ENCODE measurements at regions of chr3 and their contacts with region 1.

Region 1: GRCh38 chr3:65953301-65953812 is 85.4 kb downstream of the MAGI1 start:
- DNase-seq: peak; percentile 52
- H3K4me3 ChIP-seq: no peak overlapping the region
- H3K27ac ChIP-seq: peak overlapping the region; percentile 70
- H3K4me1 ChIP-seq: peaks cover 83% of the 10 kb centered on the region
- H3K27me3 ChIP-seq: no peaks in the 10 kb centered on the region
- CTCF ChIP-seq: no peak
- POLR2A ChIP-seq: no peak

Region 2: DNA sequence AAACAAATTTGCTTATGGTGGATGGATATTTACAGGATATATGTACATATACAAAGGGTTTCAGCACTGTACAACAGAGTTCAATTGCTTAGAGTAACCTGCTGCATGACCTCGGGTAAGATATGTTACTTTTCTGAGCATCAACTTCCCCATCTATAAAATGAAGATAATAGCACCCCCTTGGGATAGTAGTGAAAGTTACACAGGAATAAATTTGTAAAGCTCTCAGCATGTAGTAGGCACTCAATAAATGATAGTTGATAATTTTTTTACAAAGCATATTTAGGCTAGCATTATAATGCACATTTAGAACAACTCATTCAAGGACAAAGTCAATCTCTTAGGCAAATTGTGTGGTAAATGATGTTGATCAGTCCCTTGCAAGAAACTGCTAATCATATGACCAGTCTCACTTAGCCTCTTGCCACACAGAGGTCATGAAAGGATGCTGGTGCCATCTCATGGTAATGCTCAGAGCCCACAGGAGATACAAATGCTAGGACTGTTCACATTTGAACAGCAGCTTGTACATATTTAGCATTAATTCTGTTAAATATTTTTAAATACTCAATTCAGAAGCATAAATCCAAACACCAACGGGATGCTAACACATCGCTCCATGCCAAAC is 38.5 kb before region 1 on chr3:
- CTCF ChIA-PET with region 1: interaction called, 7 read pairs
- POLR2A ChIA-PET with region 1: no interaction called
- dilution Hi-C with region 1: no loop called
- intact Hi-C with region 1: loop called (anchors 1 kb)
- DNase-seq: peak; percentile 17
- H3K4me3 ChIP-seq: no peak overlapping the region
- H3K27ac ChIP-seq: peak overlapping the region; percentile 45
- H3K4me1 ChIP-seq: peaks cover 13% of the 10 kb centered on the region
- H3K27me3 ChIP-seq: no peaks in the 10 kb centered on the region
- CTCF ChIP-seq: no peak
- POLR2A ChIP-seq: no peak

Region 3: GRCh38 chr3:65936908-65937638 is 16.3 kb before region 1 on chr3:
- CTCF ChIA-PET with region 1: interaction called, 8 read pairs
- POLR2A ChIA-PET with region 1: no interaction called
- dilution Hi-C with region 1: no loop called
- intact Hi-C with region 1: loop called (anchors 1 kb)
- DNase-seq: peak; percentile 82
- H3K4me3 ChIP-seq: no peak overlapping the region
- H3K27ac ChIP-seq: no peak overlapping the region
- H3K4me1 ChIP-seq: peaks cover 29% of the 10 kb centered on the region
- H3K27me3 ChIP-seq: no peaks in the 10 kb centered on the region
- CTCF ChIP-seq: no peak
- POLR2A ChIP-seq: no peak

Region 4: GRCh38 chr3:65988411-65989180 is 35.2 kb after region 1 on chr3:
- CTCF ChIA-PET with region 1: no interaction called
- POLR2A ChIA-PET with region 1: no interaction called
- dilution Hi-C with region 1: no loop called
- intact Hi-C with region 1: no loop called
- DNase-seq: no peak
- H3K4me3 ChIP-seq: no peak overlapping the region
- H3K27ac ChIP-seq: no peak overlapping the region
- H3K4me1 ChIP-seq: peaks cover 8% of the 10 kb centered on the region
- H3K27me3 ChIP-seq: no peaks in the 10 kb centered on the region
- CTCF ChIP-seq: no peak
- POLR2A ChIP-seq: no peak

Region 5: DNA sequence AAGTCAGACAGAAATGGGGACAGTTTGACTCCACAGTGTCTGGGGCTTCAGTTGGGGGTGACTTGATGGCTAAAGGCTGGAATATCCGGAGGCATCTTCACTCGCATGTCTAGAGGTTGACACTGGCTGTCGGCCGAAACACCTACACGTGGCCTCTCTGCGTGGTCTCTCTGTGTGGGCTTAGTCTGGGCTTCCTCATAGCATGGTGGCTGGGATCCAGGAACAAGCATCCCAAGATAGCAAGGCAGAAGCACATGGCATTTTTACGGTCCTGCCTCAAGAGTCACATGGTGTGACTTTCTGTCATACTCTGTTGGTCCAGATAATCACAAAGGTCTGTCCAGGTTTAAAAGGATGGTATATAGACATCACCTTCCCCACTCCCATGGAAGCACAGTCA is 50.9 kb after region 1 on chr3:
- CTCF ChIA-PET with region 1: no interaction called
- POLR2A ChIA-PET with region 1: no interaction called
- dilution Hi-C with region 1: no loop called
- intact Hi-C with region 1: no loop called
- DNase-seq: no peak
- H3K4me3 ChIP-seq: no peak overlapping the region
- H3K27ac ChIP-seq: no peak overlapping the region
- H3K4me1 ChIP-seq: peaks cover 20% of the 10 kb centered on the region
- H3K27me3 ChIP-seq: no peaks in the 10 kb centered on the region
- CTCF ChIP-seq: no peak
- POLR2A ChIP-seq: no peak

Region 6: GRCh38 chr3:66133050-66133757 is 179.8 kb after region 1 on chr3:
- CTCF ChIA-PET with region 1: interaction called, 4 read pairs
- POLR2A ChIA-PET with region 1: no interaction called
- dilution Hi-C with region 1: no loop called
- intact Hi-C with region 1: loop called (anchors 1 kb)
- DNase-seq: peak; percentile 79
- H3K4me3 ChIP-seq: no peak overlapping the region
- H3K27ac ChIP-seq: peak overlapping the region; percentile 68
- H3K4me1 ChIP-seq: peaks cover 24% of the 10 kb centered on the region
- H3K27me3 ChIP-seq: no peaks in the 10 kb centered on the region
- CTCF ChIP-seq: no peak
- POLR2A ChIP-seq: no peak